Activated CD8-positive, alpha-beta T cell treated with anti-CD3 and anti-CD28 coated beads for 36 hours (primary cell): ENCODE measurements at regions of chr7 and their contacts with region 1.

Region 1: GRCh38 chr7:138886501-138886917 is 88.5 kb upstream of the ATP6V0A4 start:
- DNase-seq: peak; percentile 55
- ATAC-seq: peak; percentile 78
- H3K4me3 Mint-ChIP-seq: no peak overlapping the region
- H3K27ac Mint-ChIP-seq: peak overlapping the region; percentile 77
- H3K4me1 Mint-ChIP-seq: peaks cover 18% of the 10 kb centered on the region
- H3K27me3 Mint-ChIP-seq: no peaks in the 10 kb centered on the region
- CTCF ChIP-seq: peak; percentile 78

Region 2: DNA sequence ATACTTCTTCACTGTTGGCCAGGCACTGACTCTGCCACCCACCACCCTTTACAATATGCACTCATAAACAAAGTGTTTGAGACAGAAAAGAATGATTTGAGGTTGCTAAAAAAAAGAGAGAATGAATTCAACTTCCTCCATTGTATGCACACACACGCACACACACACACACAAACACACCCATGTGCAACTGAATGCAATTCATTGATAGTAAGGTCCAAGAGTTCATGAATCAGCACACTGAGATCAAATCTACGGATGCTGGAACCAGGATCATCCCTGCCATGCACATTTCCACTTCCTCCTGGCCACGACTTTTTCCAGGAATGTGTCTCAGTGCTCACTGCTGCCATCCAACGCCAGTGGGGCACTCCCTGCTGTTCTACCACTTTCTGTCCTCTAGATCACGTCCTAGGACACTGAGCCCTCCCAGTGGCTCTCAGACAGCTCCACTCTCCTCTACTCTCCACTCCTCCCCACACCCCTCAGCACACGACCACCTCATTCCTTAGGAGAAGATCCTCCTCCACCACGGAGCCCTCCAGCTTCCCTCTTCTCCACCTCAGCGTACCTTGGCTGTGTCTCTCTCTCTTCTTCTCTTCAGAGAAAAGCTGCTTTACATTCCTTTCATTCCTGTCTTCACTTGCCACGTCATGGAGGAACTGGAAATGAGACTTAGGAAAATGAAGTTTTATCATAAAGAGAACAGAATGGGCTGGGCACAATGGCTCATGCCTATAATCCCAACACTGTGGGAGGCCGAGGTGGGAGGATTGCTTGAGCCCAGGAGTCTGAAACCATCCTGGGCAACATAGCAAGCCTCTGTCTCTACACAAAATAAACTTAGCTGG is 100.7 kb before region 1 on chr7:
- CTCF ChIA-PET with region 1: no interaction called
- POLR2A ChIA-PET with region 1: no interaction called
- intact Hi-C with region 1: no loop called
- DNase-seq: no peak
- ATAC-seq: no peak
- H3K4me3 Mint-ChIP-seq: no peak overlapping the region
- H3K27ac Mint-ChIP-seq: no peak overlapping the region
- H3K4me1 Mint-ChIP-seq: no peaks in the 10 kb centered on the region
- H3K27me3 Mint-ChIP-seq: no peaks in the 10 kb centered on the region
- CTCF ChIP-seq: no peak

Region 3: DNA sequence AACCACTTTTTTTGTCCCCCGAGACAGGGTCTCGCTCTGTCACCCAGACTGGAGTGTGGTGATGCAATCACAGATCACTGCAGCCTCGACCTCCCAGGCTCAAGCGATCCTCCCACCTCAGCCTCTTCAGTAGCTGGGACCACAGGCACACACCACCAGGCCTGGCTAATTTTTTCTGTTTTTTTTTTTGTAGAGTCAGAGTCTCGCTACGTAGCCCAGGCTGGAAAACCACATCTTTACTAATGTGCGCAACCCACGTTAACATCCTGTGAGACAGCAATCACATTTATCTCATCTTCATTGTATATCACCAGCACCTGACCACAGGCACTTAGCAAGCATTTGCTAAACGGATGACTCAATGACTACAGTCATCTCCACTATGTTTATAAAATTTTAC is 10.7 kb before region 1 on chr7:
- CTCF ChIA-PET with region 1: interaction called, 33 read pairs
- POLR2A ChIA-PET with region 1: no interaction called
- intact Hi-C with region 1: no loop called
- DNase-seq: peak; percentile 84
- ATAC-seq: peak; percentile 98
- H3K4me3 Mint-ChIP-seq: no peak overlapping the region
- H3K27ac Mint-ChIP-seq: peak overlapping the region; percentile 82
- H3K4me1 Mint-ChIP-seq: peaks cover 17% of the 10 kb centered on the region
- H3K27me3 Mint-ChIP-seq: no peaks in the 10 kb centered on the region
- CTCF ChIP-seq: no peak

Region 4: DNA sequence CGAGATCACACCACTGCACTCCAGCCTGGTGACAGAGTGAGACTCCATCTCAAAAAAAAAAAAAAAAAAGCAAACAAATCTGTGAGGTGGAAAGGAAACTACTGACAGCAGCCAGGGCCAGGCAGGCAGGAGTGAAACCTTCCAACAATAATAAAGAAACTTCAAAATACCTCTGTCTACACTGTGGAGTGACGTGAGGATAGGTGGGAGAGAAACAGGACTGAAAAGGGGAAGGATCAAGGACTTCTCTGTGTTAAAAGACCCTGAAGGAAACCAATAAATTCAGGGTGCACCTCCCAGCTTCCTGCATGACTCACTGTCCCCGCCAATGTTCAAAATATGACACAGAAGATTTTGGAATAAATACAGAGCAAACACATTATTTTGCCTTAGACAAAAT is 11.7 kb after region 1 on chr7:
- CTCF ChIA-PET with region 1: interaction called, 89 read pairs
- POLR2A ChIA-PET with region 1: interaction called, 5 read pairs
- intact Hi-C with region 1: no loop called
- DNase-seq: peak; percentile 38
- ATAC-seq: peak; percentile 68
- H3K4me3 Mint-ChIP-seq: no peak overlapping the region
- H3K27ac Mint-ChIP-seq: peak overlapping the region; percentile 70
- H3K4me1 Mint-ChIP-seq: peaks cover 35% of the 10 kb centered on the region
- H3K27me3 Mint-ChIP-seq: peaks cover 5% of the 10 kb centered on the region
- CTCF ChIP-seq: no peak

Region 5: DNA sequence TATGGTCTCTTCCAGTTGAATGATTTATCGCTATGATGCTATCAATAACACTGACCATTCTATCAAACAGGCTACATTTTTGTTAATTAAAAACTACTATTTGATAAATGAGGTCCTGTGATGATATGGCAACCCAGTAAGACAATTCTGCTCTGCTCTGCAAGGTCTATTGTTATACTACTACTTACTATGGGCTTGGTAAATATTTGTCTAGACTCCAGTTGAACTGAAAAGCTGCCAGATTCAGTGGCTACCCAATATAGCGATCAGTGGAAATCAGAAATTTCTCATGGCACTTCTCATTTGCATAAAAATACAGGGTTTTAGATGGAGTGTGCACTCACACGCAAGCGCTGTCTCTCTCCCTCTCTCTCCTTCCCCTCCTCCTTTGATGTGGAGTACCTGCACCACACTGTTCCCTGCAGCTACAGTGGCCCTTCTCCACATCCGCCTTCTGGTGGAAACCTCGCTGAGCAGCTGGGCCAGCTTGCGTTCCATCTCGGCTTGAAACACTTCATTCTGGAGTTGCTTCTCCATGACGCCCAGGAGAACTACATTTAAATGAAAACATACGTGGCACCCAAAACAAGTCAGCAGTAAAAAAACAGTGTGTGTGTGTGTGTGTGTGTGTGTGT is 16.8 kb after region 1 on chr7:
- CTCF ChIA-PET with region 1: interaction called, 89 read pairs
- POLR2A ChIA-PET with region 1: interaction called, 5 read pairs
- intact Hi-C with region 1: no loop called
- DNase-seq: peak; percentile 88
- ATAC-seq: peak; percentile 88
- H3K4me3 Mint-ChIP-seq: peak overlapping the region; percentile 62
- H3K27ac Mint-ChIP-seq: peak overlapping the region; percentile 79
- H3K4me1 Mint-ChIP-seq: peaks cover 39% of the 10 kb centered on the region
- H3K27me3 Mint-ChIP-seq: peaks cover 10% of the 10 kb centered on the region
- CTCF ChIP-seq: no peak

Region 6: GRCh38 chr7:138924501-138925225 is 38.2 kb after region 1 on chr7:
- CTCF ChIA-PET with region 1: interaction called, 10 read pairs
- POLR2A ChIA-PET with region 1: no interaction called
- intact Hi-C with region 1: no loop called
- DNase-seq: no peak
- ATAC-seq: no peak
- H3K4me3 Mint-ChIP-seq: no peak overlapping the region
- H3K27ac Mint-ChIP-seq: no peak overlapping the region
- H3K4me1 Mint-ChIP-seq: peaks cover 10% of the 10 kb centered on the region
- H3K27me3 Mint-ChIP-seq: no peaks in the 10 kb centered on the region
- CTCF ChIP-seq: no peak

Region 7: DNA sequence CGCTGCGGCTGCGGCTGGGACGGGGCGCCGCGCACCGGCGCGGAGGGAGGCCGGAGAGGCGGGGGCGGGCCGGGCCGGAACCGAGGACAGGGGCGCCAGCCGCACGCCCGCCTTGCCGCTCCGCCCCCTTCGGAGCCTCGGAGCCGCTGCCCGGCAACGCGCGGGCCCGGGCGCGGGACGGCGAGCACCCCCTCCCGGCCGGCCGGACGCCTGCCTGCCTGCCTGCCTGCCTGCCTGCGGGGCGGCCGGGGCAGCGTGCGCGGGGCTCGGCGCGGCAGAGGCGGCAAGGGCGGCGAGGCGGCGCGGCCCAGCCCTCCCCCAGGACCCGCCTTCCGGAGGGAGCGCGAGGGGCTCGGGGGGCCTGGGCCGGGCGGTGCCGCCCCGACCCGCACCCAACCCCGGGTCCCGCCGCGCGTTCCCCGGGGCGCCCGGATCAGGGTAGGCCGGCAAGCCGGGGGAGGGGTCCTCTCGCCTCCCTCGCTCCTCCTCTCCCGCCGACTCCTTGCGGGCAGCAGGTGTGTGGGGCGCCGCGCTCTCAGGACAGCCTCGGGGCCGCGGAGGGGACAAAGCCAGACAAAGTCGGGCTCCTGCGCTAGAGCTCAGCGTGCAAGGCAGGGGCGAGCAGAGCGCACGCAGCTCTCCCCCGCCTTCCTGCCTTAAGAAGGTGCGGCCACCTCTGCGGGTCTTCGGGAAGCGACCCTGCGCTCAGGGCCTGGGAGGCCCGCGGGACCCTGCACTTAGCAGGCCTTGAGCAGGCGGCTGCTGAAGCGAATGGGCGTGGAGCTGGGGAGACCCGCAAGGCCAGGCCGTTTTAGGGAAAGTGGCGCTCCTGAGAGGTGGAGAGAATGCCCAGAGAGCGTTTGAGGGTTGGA is 95.1 kb after region 1 on chr7 and contains the start of gene KIAA1549:
- CTCF ChIA-PET with region 1: interaction called, 44 read pairs
- POLR2A ChIA-PET with region 1: no interaction called
- intact Hi-C with region 1: loop called (anchors 1 kb)
- DNase-seq: peak; percentile 57
- ATAC-seq: peak; percentile 90
- H3K4me3 Mint-ChIP-seq: peak within 1 kb of the TSS; percentile 78
- H3K27ac Mint-ChIP-seq: peak within 1 kb of the TSS; percentile 52
- H3K4me1 Mint-ChIP-seq: peaks cover 16% of the 10 kb centered on the region
- H3K27me3 Mint-ChIP-seq: peaks cover 32% of the 10 kb centered on the region
- CTCF ChIP-seq: no peak
- total RNA-seq, gene KIAA1549: 1.3 to 1.5 TPM

Region 8: GRCh38 chr7:139016931-139017511 is 130.5 kb after region 1 on chr7:
- CTCF ChIA-PET with region 1: interaction called, 21 read pairs
- POLR2A ChIA-PET with region 1: interaction called, 3 read pairs
- intact Hi-C with region 1: no loop called
- DNase-seq: peak; percentile 79
- ATAC-seq: peak; percentile 94
- H3K4me3 Mint-ChIP-seq: no peak overlapping the region
- H3K27ac Mint-ChIP-seq: no peak overlapping the region
- H3K4me1 Mint-ChIP-seq: peaks cover 6% of the 10 kb centered on the region
- H3K27me3 Mint-ChIP-seq: no peaks in the 10 kb centered on the region
- CTCF ChIP-seq: peak; percentile 77

Region 9: GRCh38 chr7:139441961-139442360 is 555.5 kb after region 1 on chr7:
- CTCF ChIA-PET with region 1: no interaction called
- POLR2A ChIA-PET with region 1: no interaction called
- intact Hi-C with region 1: no loop called
- DNase-seq: no peak
- ATAC-seq: no peak
- H3K4me3 Mint-ChIP-seq: no peak overlapping the region
- H3K27ac Mint-ChIP-seq: no peak overlapping the region
- H3K4me1 Mint-ChIP-seq: no peaks in the 10 kb centered on the region
- H3K27me3 Mint-ChIP-seq: no peaks in the 10 kb centered on the region
- CTCF ChIP-seq: no peak